ENCODE measurements at regions of chr12 and their contacts with region 1.

Region 1: DNA sequence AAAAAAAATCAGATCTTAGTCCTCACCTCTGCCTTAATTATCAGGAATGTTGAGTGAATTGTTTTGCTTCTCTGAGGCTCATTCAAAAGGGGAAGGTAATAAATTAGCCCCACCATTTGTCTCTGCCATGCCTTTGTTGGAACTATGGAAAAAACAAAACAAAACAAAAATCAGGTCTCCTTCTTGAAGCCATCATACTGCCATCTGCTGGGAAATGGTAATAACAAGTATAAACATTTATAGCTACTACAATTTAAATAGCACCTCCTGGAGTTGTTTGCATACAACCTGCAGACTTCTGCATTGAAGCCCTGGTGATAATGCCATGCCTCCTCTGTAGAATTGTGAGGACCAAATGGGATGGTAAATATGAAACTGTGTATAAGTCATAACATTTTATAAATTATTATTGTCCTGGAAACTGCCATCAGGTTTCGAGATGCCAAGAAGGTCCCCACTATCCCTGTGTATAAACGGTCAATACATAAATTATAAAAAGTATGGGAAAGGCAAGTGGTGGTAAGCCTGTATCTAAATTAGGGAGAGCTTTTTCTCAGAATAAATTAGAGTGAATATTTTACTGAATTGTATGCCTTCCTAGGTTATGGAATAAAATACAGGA is 87.2 kb upstream of the FGD4 start:
- DNase-seq: no peak
- H3K4me3 Mint-ChIP-seq: no peak overlapping the region
- H3K27ac Mint-ChIP-seq: no peak overlapping the region
- H3K4me1 Mint-ChIP-seq: peaks cover 2% of the 10 kb centered on the region
- H3K27me3 Mint-ChIP-seq: peaks cover 5% of the 10 kb centered on the region

Region 2: DNA sequence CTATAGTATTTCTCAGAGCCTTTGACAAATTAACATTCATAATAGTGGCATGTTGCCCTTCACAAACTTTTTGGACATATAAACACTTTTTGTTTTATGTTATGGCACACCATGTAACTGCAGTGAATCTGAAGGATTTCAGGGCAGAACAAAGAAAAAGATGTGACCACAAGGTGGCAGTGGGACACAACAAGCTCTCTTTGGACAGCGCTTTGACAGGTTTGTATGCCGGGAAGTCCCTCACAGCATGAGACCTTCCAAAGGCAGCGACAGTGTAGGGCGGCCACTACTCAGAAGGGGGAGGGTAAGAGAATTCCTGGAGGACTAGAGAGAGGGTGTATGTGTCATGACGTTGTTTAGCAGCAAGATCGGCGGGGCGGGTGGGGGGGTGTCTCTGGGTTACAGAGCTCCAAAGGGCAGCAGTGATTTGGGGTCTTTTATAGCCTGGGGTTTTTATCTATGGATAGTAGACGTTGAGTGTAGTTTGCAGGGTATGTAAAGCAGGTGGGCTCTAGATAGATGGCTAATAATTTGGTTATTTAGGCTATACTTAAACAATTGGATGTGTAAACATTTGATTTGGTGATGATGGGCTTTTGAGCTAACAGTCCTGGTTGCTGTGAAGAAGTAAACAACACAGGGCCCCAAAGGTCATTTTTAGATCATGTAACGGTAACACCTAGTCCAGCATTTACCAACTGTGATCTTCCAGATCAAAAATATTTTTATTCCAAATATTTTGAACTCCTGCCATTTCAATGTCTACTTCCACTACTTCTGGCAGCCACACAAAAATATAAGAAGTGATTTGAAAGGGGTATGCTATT is 629.8 kb before region 1 on chr12:
- intact Hi-C with region 1: loop called (anchors 2 kb)
- DNase-seq: peak; percentile 46
- H3K4me3 Mint-ChIP-seq: no peak overlapping the region
- H3K27ac Mint-ChIP-seq: no peak overlapping the region
- H3K4me1 Mint-ChIP-seq: peaks cover 5% of the 10 kb centered on the region
- H3K27me3 Mint-ChIP-seq: no peaks in the 10 kb centered on the region

Region 3: DNA sequence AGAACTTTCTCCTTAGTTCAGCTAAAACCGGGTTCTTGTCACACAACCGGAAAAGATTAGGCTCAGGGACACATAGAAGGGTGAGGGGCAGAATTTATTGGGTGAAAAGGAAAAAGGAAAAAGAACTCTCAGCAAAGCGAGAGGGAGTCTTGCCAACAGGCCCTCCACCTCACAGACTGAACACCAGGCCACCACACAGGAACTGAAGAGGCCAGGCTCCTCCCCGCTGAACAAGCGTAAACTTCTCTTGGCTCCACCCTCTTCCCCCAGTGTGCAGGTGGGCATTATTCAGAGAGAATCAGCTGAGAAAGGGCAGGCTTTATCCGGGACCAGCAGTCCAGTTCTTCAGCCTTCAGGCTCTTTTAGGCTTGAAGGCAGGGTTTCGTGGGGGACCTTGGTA is 38.4 kb before region 1 on chr12:
- intact Hi-C with region 1: no loop called
- DNase-seq: no peak
- H3K4me3 Mint-ChIP-seq: no peak overlapping the region
- H3K27ac Mint-ChIP-seq: no peak overlapping the region
- H3K4me1 Mint-ChIP-seq: peaks cover 16% of the 10 kb centered on the region
- H3K27me3 Mint-ChIP-seq: no peaks in the 10 kb centered on the region

Measured in activated T-helper 2 cell treated with anti-CD3 and anti-CD28 coated beads, Interferon-gamma antibody, Interleukin-2, Interleukin-4, amounts not matched to agents 10 μg/mL and 5 μg/mL and 100 μg/mL, durations not matched to agents 14 hours and 24 hours and 36 hours (primary cell).